ENCODE measurements at regions of chr5 and their contacts with region 1.

Region 1: GRCh38 chr5:37722236-37723146 is 117.3 kb downstream of the GDNF start:
- DNase-seq: peak; percentile 14
- H3K4me3 ChIP-seq: no peak overlapping the region
- H3K27ac ChIP-seq: peak overlapping the region; percentile 82
- H3K4me1 ChIP-seq: peaks cover 40% of the 10 kb centered on the region
- H3K27me3 ChIP-seq: no peaks in the 10 kb centered on the region
- CTCF ChIP-seq: no peak
- POLR2A ChIP-seq: no peak

Region 2: GRCh38 chr5:36875790-36876388 is 846.6 kb before region 1 on chr5:
- CTCF ChIA-PET with region 1: no interaction called
- POLR2A ChIA-PET with region 1: no interaction called
- dilution Hi-C with region 1: no loop called
- intact Hi-C with region 1: loop called (anchors 10 kb)
- DNase-seq: peak; percentile 85
- H3K4me3 ChIP-seq: peak overlapping the region; percentile 80 to 99 (median 92)
- H3K27ac ChIP-seq: peak overlapping the region; percentile 83
- H3K4me1 ChIP-seq: peaks cover 30% of the 10 kb centered on the region
- H3K27me3 ChIP-seq: no peaks in the 10 kb centered on the region
- CTCF ChIP-seq: peak; percentile 43 to 73
- POLR2A ChIP-seq: no peak

Region 3: GRCh38 chr5:37308796-37309195 is 413.7 kb before region 1 on chr5:
- CTCF ChIA-PET with region 1: no interaction called
- POLR2A ChIA-PET with region 1: no interaction called
- dilution Hi-C with region 1: no loop called
- intact Hi-C with region 1: no loop called
- DNase-seq: no peak
- H3K4me3 ChIP-seq: no peak overlapping the region
- H3K27ac ChIP-seq: no peak overlapping the region
- H3K4me1 ChIP-seq: no peaks in the 10 kb centered on the region
- H3K27me3 ChIP-seq: no peaks in the 10 kb centered on the region
- CTCF ChIP-seq: no peak
- POLR2A ChIP-seq: no peak

Region 4: GRCh38 chr5:37668524-37669047 is 53.9 kb before region 1 on chr5:
- CTCF ChIA-PET with region 1: interaction called, 4 read pairs
- POLR2A ChIA-PET with region 1: no interaction called
- dilution Hi-C with region 1: no loop called
- intact Hi-C with region 1: loop called (anchors 5 kb)
- DNase-seq: peak; percentile 88
- H3K4me3 ChIP-seq: no peak overlapping the region
- H3K27ac ChIP-seq: peak overlapping the region; percentile 41
- H3K4me1 ChIP-seq: peaks cover 19% of the 10 kb centered on the region
- H3K27me3 ChIP-seq: no peaks in the 10 kb centered on the region
- CTCF ChIP-seq: no peak
- POLR2A ChIP-seq: no peak

Region 5: DNA sequence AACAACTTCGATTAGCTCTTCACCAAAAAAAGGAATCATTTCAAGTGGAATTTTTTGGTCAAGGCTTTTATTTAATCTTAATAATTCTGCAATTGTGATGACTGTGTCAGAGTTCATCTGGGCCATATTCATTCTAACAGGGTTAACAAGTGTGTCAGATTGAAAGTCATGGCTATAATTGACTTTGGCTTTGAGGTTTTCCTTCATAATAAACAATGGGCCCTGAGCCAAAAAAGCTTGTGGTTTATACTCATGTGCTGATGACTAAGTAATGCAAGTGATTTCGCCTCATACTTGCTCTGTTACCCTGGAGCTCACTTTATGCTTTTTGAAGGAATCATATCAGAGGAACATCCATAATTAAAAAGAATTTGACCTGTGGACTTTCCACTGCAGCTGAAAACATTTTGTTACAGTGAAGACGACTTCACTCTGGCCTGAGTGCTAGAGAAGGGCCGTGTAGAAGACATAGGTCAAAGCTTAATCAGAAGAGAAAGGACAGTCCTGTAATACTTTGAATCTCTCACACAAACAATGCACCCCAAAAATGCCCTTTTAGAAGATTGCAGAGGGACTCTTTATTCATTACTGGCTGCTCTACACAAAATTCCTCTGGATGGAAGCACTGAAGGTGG is 15.7 kb after region 1 on chr5:
- CTCF ChIA-PET with region 1: interaction called, 59 read pairs
- POLR2A ChIA-PET with region 1: no interaction called
- dilution Hi-C with region 1: no loop called
- intact Hi-C with region 1: loop called (anchors 1 kb)
- DNase-seq: peak; percentile 95
- H3K4me3 ChIP-seq: no peak overlapping the region
- H3K27ac ChIP-seq: peak overlapping the region; percentile 42
- H3K4me1 ChIP-seq: peaks cover 19% of the 10 kb centered on the region
- H3K27me3 ChIP-seq: no peaks in the 10 kb centered on the region
- CTCF ChIP-seq: no peak
- POLR2A ChIP-seq: no peak

Region 6: GRCh38 chr5:37837414-37838032 is 115.0 kb after region 1 on chr5:
- CTCF ChIA-PET with region 1: interaction called, 3 read pairs
- POLR2A ChIA-PET with region 1: no interaction called
- dilution Hi-C with region 1: no loop called
- intact Hi-C with region 1: loop called (anchors 5 kb)
- DNase-seq: peak; percentile 57
- H3K4me3 ChIP-seq: peak overlapping the region in 1 of 3 experiments; percentile 14
- H3K27ac ChIP-seq: no peak overlapping the region
- H3K4me1 ChIP-seq: peaks cover 24% of the 10 kb centered on the region
- H3K27me3 ChIP-seq: peaks cover 84 to 96% of the 10 kb centered on the region in 2 experiments
- CTCF ChIP-seq: peak; percentile 68 to 86
- POLR2A ChIP-seq: no peak